Caco-2 (cell line): ENCODE measurements at regions of chr2 and their contacts with region 1.

Region 1: GRCh38 chr2:192190474-192190873 is 4.3 kb downstream of the TMEFF2 start:
- DNase-seq: no peak
- H3K4me3 ChIP-seq: no peak overlapping the region
- H3K4me3 Mint-ChIP-seq: no peak overlapping the region
- H3K27ac Mint-ChIP-seq: no peak overlapping the region
- H3K4me1 ChIP-seq: no peaks in the 10 kb centered on the region
- H3K4me1 Mint-ChIP-seq: no peaks in the 10 kb centered on the region
- H3K27me3 ChIP-seq: no peaks in the 10 kb centered on the region
- H3K27me3 Mint-ChIP-seq: peaks cover 4% of the 10 kb centered on the region
- CTCF ChIP-seq: peak; percentile 41 to 50

Region 2: DNA sequence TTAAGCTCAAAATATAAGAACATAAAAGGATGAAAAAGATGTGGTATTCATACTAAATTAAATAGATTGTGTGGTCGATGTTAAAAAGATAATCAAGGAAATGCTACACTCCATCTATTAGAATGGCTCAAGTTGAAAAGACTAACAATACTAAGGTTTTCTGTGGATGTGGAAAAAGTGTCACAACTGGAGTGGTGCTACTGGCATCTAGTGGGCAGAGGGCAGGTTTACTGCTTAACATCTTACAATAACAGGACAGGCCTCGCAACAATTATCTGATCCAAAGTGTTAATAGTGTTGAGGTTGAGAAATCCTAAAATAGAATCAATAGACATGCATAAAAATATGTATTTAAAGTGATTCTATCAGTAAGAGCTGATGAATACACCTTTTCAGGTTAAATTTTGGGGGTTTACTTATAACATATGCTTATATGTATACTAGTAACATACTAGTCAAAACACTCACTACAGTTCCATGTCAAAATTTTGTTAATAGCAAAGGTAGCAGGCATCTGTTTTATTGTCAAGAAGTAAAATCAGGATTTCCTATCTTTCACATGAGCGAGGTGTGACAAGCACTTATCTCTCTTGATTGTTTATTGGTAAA is 95.7 kb after region 1 on chr2:
- CTCF ChIA-PET with region 1: no interaction called
- POLR2A ChIA-PET with region 1: no interaction called
- intact Hi-C with region 1: loop called (anchors 1 kb)
- DNase-seq: peak in 1 of 2 experiments; percentile 12
- H3K4me3 ChIP-seq: no peak overlapping the region
- H3K4me3 Mint-ChIP-seq: no peak overlapping the region
- H3K27ac Mint-ChIP-seq: no peak overlapping the region
- H3K4me1 ChIP-seq: no peaks in the 10 kb centered on the region
- H3K4me1 Mint-ChIP-seq: no peaks in the 10 kb centered on the region
- H3K27me3 ChIP-seq: no peaks in the 10 kb centered on the region
- H3K27me3 Mint-ChIP-seq: no peaks in the 10 kb centered on the region
- CTCF ChIP-seq: peak; percentile 10 to 22

Region 3: GRCh38 chr2:192559541-192560120 is 369.2 kb after region 1 on chr2:
- CTCF ChIA-PET with region 1: no interaction called
- POLR2A ChIA-PET with region 1: no interaction called
- intact Hi-C with region 1: loop called (anchors 1 kb)
- DNase-seq: peak in 1 of 2 experiments; percentile 8
- H3K4me3 ChIP-seq: no peak overlapping the region
- H3K4me3 Mint-ChIP-seq: no peak overlapping the region
- H3K27ac Mint-ChIP-seq: no peak overlapping the region
- H3K4me1 ChIP-seq: peaks cover 8% of the 10 kb centered on the region; the same call in 1 of the 2 replicates
- H3K4me1 Mint-ChIP-seq: peaks cover 6% of the 10 kb centered on the region
- H3K27me3 ChIP-seq: no peaks in the 10 kb centered on the region
- H3K27me3 Mint-ChIP-seq: no peaks in the 10 kb centered on the region
- CTCF ChIP-seq: no peak